ENCODE measurements at regions of chr15 and their contacts with region 1.

Region 1: DNA sequence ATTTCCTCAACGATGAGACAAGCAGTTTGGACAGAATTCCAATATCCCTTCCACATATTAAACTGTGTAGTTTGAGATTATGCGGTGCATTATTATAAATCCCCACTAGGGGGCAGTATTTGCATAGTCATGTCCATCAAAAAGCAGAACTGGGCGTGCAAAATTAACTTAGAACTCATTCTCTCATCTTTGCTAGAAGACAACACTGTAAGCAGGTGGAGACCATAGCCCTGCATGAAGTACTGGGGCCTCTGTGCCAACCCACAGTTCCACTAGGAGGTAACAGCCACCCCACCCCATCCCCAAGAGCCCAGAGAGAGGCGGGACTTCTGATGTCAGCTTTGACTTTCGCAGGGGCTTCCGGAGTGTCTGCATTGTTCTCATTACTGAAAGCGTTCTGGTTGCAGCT is 106.6 kb upstream of the TMC3 start:
- DNase-seq: peak; percentile 39
- ATAC-seq: peak; percentile 75; the same call in 1 of the 2 replicates
- H3K4me3 ChIP-seq: no peak overlapping the region
- H3K27ac ChIP-seq: no peak overlapping the region
- H3K4me1 ChIP-seq: no peaks in the 10 kb centered on the region
- H3K27me3 ChIP-seq: no peaks in the 10 kb centered on the region; the same call in 1 of the 2 replicates
- CTCF ChIP-seq: peak; percentile 80

Region 2: DNA sequence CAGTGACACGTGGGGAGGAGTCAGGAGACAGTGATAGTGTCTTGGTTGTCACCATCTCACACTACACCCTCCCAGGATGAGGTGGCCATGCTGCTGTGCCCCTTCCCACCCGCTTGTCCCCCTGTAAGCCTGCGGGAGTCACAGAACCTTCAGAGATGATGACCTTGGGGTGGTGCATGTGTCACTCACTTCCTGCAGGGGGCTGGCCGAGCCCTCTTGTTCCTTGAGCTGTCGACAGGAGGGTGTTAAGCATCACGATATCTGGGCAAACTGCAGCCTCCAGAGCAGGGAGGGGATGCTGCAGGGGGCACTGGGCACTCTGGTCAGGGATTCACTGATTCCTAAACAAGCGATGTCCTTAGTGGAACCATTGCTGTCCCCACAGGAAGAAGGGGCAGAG is 1300.2 kb before region 1 on chr15:
- CTCF ChIA-PET with region 1: interaction called, 11 read pairs
- POLR2A ChIA-PET with region 1: no interaction called
- in situ Hi-C with region 1: no loop called
- intact Hi-C with region 1: no loop called
- DNase-seq: no peak
- ATAC-seq: no peak
- H3K4me3 ChIP-seq: no peak overlapping the region
- H3K27ac ChIP-seq: no peak overlapping the region
- H3K4me1 ChIP-seq: peaks cover 10% of the 10 kb centered on the region
- H3K27me3 ChIP-seq: no peaks in the 10 kb centered on the region
- CTCF ChIP-seq: no peak

Region 3: DNA sequence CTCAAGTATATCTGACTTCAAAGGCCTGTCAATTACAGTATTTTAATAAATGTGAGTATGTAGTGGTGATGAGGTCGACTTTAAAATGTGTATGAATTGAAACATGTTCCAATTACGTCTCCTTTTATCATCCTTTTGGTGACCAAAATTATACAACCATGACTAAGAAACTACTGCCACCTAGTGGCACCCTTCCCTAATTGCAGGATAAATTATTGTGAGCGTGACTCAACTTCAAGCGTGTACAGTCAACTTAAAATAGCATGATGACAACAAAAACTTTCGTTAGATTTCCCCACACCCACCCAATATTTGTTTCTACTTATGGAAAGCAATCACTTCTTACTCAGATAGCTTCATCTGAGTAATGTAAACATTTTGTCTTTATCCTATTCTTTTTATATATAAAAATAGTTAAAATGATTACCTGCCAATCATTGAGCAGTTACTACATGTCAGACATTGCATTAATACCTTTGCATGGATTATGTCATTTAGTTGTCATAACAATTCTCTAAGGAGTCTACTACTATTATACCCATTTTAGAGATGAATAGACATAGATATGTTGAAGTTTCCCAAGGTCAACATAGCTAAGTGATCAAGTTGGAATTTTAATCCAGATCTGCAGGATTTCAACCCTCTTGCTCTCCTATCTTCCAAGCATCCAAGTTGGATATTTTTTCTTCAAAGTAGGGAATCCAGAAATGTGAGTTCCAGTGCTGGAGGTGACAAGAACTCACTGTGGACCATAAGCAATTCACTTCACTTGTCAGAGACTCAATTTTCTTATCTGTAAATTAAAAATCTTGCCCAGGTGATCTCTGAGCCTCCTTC is 459.2 kb after region 1 on chr15:
- CTCF ChIA-PET with region 1: no interaction called
- POLR2A ChIA-PET with region 1: no interaction called
- in situ Hi-C with region 1: no loop called
- intact Hi-C with region 1: loop called (anchors 5 kb)
- DNase-seq: peak; percentile 8
- ATAC-seq: no peak
- H3K4me3 ChIP-seq: no peak overlapping the region
- H3K27ac ChIP-seq: no peak overlapping the region
- H3K4me1 ChIP-seq: no peaks in the 10 kb centered on the region
- H3K27me3 ChIP-seq: no peaks in the 10 kb centered on the region
- CTCF ChIP-seq: peak; percentile 76; the same call in 1 of the 2 replicates

Region 4: DNA sequence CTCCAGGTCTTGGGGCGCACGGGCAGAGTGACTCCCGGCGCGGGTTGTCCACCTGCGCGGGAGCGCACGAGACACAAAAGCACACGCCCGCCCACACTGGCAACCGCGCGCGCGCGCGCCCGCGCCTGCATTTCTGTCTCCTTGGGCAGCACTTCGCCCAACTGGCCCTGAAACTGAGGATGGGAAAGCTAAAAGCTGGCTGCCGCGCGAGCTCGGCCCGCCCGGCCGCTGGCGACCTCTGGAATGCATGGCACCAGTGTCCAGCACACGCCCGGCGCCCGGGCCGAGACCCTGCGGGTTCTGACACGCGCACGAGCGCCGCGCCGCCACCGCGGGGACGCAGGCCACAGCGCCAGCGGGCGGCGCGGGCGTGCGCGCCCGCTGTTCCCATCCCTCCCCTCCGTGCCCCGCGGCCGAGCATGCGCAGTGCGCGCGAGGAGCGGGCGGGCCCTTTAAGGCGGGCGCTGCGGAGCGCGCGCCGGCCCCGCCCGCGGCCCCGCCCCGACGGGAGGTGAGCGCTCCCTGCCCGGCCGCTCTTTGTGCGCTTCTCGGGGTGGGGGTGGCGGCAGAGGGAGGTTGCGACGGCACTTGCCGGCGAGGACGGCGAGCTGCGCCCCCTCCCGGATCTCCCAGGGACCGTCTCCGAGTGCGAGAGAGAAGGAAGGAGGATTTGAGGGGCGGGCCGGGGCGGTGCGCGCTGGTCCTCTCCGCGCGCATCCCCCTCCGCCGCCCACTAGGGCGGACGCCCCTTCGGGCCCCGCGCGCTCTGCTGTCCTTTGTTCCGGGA is 566.2 kb after region 1 on chr15:
- CTCF ChIA-PET with region 1: no interaction called
- POLR2A ChIA-PET with region 1: no interaction called
- in situ Hi-C with region 1: no loop called
- intact Hi-C with region 1: loop called (anchors 2 kb)
- DNase-seq: peak; percentile 39
- ATAC-seq: peak; percentile 85
- H3K4me3 ChIP-seq: peak overlapping the region; percentile 90 to 96
- H3K27ac ChIP-seq: peak overlapping the region; percentile 95
- H3K4me1 ChIP-seq: peaks cover 4% of the 10 kb centered on the region; the same call in 1 of the 2 replicates
- H3K27me3 ChIP-seq: peaks cover 9% of the 10 kb centered on the region
- CTCF ChIP-seq: peak; percentile 91

Region 5: GRCh38 chr15:82108489-82109078 is 627.9 kb after region 1 on chr15:
- CTCF ChIA-PET with region 1: interaction called, 14 read pairs
- POLR2A ChIA-PET with region 1: no interaction called
- in situ Hi-C with region 1: no loop called
- intact Hi-C with region 1: no loop called
- DNase-seq: peak; percentile 51
- ATAC-seq: peak; percentile 95
- H3K4me3 ChIP-seq: no peak overlapping the region
- H3K27ac ChIP-seq: no peak overlapping the region
- H3K4me1 ChIP-seq: no peaks in the 10 kb centered on the region
- H3K27me3 ChIP-seq: no peaks in the 10 kb centered on the region
- CTCF ChIP-seq: peak; percentile 98

Region 6: DNA sequence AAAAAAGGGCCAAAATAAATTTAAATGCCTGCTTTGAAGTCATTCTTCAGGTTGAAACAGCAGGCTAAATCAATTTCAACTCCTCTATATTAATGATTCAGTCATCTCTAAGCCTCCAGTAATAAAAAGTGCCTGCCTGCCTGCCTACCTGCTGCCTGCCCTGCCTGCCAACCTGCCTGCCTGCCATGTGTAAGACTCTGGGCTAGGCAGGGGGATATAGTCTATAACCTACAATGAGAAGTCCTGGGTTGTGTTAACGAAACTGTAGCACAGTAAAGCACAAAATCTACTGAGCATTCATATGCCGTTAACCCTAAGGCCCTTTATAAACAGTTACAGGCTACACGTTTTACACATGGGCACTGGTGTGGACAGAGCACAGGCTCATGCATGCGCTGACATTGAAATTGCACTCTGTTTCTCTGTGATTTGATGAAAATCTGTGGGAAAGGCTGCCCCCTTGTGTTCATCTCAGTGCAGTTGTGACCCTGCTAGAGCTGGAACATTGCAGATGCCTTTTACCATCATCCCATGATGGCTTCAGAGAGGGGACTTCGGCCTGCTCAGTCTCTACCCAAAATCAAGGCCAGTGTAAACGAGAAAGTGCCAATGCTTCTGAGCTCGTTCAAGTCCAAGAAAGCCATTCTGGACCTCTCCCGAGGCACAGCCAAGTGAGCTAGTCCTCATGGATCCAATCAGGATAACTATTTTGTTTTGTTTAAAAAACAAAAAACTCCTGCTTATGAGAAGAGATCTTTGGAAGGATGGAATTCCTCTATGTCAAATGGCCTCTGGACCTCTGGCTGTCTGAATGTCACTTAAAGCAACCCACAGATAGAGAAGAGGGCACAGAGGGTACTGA is 717.3 kb after region 1 on chr15:
- CTCF ChIA-PET with region 1: no interaction called
- POLR2A ChIA-PET with region 1: no interaction called
- in situ Hi-C with region 1: no loop called
- intact Hi-C with region 1: loop called (anchors 2 kb)
- DNase-seq: peak; percentile 52
- ATAC-seq: peak; percentile 100
- H3K4me3 ChIP-seq: no peak overlapping the region
- H3K27ac ChIP-seq: no peak overlapping the region
- H3K4me1 ChIP-seq: no peaks in the 10 kb centered on the region
- H3K27me3 ChIP-seq: no peaks in the 10 kb centered on the region
- CTCF ChIP-seq: peak; percentile 86

Region 7: DNA sequence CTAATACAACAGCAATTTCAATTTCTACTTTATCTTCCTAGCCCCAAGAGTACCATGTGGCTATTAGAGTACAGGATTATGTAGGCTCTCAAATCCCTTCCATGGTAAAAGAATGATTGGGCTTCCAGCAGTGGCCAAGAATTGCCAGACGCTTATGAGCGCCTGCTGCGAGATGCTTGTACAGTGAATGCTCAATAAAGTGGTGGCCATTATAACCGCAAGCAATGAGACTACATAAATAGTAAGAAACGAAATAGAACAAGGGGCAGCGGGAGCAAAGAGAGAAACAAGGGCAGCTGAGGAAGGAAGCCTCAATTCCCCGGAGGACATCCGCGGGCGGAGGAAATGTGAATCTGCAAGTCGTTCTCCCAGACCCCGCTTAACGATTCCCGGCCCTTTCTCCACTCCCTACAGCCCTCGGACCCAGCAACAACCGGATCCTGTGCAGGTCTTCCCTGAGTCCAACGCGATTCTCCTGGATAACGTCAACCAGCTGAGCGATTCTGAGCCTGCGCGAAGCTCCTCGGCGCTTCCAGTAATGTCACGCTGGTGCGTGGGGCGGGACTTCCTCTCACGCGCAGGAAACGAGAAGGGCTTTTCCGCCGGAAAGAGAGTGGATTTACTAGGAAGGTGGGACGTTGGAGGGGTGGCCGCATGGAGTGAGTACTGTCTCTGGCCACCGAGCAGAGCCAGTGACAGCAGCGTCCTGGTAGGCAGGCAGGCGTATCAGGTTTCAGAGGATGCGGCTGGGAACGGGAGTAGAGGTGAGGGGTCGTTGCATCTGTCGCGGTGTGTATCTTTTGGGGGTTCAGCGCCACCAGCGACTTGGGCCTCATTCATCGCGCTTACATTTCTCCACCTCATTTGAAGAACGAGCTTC is 1269.5 kb after region 1 on chr15:
- CTCF ChIA-PET with region 1: no interaction called
- POLR2A ChIA-PET with region 1: no interaction called
- in situ Hi-C with region 1: no loop called
- intact Hi-C with region 1: no loop called
- DNase-seq: peak; percentile 85
- ATAC-seq: peak; percentile 98
- H3K4me3 ChIP-seq: peak overlapping the region; percentile 93 to 97
- H3K27ac ChIP-seq: peak overlapping the region; percentile 97
- H3K4me1 ChIP-seq: peaks cover 12% of the 10 kb centered on the region
- H3K27me3 ChIP-seq: no peaks in the 10 kb centered on the region
- CTCF ChIP-seq: no peak